Caco-2 (cell line): ENCODE measurements at regions of chr19 and their contacts with region 1.

Region 1: GRCh38 chr19:21020298-21021227 is at the start of gene ZNF430:
- DNase-seq: peak; percentile 96 to 97
- H3K4me3 ChIP-seq: peak within 1 kb of the TSS; percentile 46
- H3K4me3 Mint-ChIP-seq: peak within 1 kb of the TSS; percentile 95
- H3K27ac Mint-ChIP-seq: peak within 1 kb of the TSS; percentile 97
- H3K4me1 ChIP-seq: no peaks in the 10 kb centered on the region; the same call in 1 of the 2 replicates
- H3K4me1 Mint-ChIP-seq: peaks cover 15% of the 10 kb centered on the region
- H3K27me3 ChIP-seq: no peaks in the 10 kb centered on the region
- H3K27me3 Mint-ChIP-seq: no peaks in the 10 kb centered on the region
- CTCF ChIP-seq: no peak
- total RNA-seq, gene ZNF430: 9.5 and 11.1 TPM in 2 replicates

Region 2: GRCh38 chr19:20776083-20777076 is 244.2 kb before region 1 on chr19 and contains the start of gene ZNF66:
- CTCF ChIA-PET with region 1: no interaction called
- POLR2A ChIA-PET with region 1: interaction called, 5 read pairs
- intact Hi-C with region 1: loop called (anchors 2 kb)
- DNase-seq: peak; percentile 94 to 96
- H3K4me3 ChIP-seq: peak within 1 kb of the TSS; percentile 87
- H3K4me3 Mint-ChIP-seq: peak within 1 kb of the TSS; percentile 82
- H3K27ac Mint-ChIP-seq: peak within 1 kb of the TSS; percentile 93
- H3K4me1 ChIP-seq: no peaks in the 10 kb centered on the region; the same call in 1 of the 2 replicates
- H3K4me1 Mint-ChIP-seq: no peaks in the 10 kb centered on the region
- H3K27me3 ChIP-seq: no peaks in the 10 kb centered on the region
- H3K27me3 Mint-ChIP-seq: no peaks in the 10 kb centered on the region
- CTCF ChIP-seq: no peak
- total RNA-seq, gene ZNF66: 10.1 and 10.9 TPM in 2 replicates

Region 3: DNA sequence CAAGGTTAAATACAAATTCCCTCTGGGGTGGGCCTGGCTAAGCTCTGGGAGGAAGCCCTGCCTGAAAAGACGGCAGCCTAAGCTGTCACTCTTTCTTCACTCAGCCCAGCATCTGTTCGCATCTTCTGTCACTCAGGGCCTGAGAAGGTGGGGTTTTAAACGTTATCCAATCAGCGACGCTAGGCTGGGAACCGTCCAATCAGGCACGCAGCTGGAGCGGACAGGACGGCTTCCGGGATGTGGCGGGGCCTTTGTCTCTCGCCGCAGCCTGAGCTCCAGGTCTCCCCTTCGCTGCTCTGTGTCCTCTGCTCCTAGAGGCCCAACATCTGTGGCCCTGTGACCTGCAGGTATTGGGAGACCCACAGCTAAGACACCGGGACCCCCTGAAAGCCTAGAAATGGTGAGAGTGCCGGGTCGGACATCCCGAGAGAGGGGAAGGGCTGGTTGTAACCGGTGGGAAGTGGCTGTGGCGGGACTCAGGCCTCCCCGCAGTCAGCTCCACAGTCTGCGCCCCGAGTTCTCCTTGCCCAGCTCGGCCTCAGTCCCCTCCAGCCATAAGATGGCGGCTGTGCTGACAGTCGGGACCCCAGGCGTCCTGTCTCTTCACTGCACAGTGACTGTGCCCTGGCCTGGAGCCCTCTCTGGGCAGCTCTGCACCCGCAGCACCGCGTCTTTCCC is 121.4 kb after region 1 on chr19 and contains the start of gene ZNF431:
- CTCF ChIA-PET with region 1: no interaction called
- POLR2A ChIA-PET with region 1: interaction called, 6 read pairs
- intact Hi-C with region 1: loop called (anchors 10 kb)
- DNase-seq: peak; percentile 90 to 94
- H3K4me3 ChIP-seq: peak within 1 kb of the TSS; percentile 75
- H3K4me3 Mint-ChIP-seq: peak within 1 kb of the TSS; percentile 95
- H3K27ac Mint-ChIP-seq: peak within 1 kb of the TSS; percentile 98
- H3K4me1 ChIP-seq: no peaks in the 10 kb centered on the region
- H3K4me1 Mint-ChIP-seq: peaks cover 9% of the 10 kb centered on the region
- H3K27me3 ChIP-seq: no peaks in the 10 kb centered on the region
- H3K27me3 Mint-ChIP-seq: no peaks in the 10 kb centered on the region
- CTCF ChIP-seq: no peak
- total RNA-seq, gene ZNF431: 17.9 TPM in 2 replicates